ENCODE measurements at regions of chrX and their contacts with region 1.

Region 1: DNA sequence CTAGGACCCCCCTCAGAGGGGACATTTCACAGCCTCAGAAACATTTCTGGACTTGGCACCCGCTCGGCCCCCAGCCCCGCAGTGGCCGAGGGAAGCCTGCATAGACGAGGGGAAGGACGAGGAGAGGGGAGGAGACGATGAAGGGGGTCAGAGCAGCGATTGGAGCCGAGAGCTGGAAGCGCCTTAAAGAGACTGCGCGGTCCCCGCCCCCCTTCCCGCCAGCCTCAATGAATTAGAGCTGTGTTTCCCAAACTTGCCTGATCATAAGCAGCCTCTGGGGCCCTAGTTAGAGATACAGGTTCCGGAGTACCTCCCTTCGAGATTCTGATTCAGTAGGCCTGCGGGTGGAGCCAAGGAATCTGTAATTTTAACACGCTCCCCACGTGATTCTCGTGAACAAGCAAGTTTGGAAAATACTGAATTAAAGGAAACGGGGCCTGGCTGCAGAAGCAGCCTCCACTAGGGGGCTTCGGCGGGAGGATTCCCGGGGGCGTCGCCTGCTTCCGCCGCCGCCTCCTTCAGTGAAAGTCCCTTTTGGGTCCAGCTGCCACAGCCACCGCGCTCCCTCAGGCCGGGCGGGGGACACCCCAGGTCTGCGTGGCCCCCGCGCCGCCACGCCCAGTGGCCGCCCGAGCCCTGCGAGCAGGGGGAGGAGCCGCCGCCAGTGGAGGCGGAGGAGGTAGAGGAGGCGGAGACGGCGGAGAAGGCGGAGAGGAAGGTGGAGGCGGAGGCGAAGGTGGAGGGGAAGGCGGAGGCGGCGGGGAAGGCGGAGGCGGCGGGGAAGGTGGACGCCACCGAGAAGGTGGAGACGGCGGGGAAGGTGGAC is at the start of gene USP27X:
- DNase-seq: peak; percentile 84
- H3K4me3 Mint-ChIP-seq: peak within 1 kb of the TSS; percentile 74
- H3K27ac Mint-ChIP-seq: peak within 1 kb of the TSS; percentile 44
- H3K4me1 Mint-ChIP-seq: peaks cover 18% of the 10 kb centered on the region
- H3K27me3 Mint-ChIP-seq: peaks cover 2% of the 10 kb centered on the region
- total RNA-seq, gene USP27X: 2.1 to 2.4 TPM

Region 2: GRCh38 chrX:49922291-49923241 is 43.5 kb after region 1 on chrX and contains the start of gene CLCN5:
- CTCF ChIA-PET with region 1: interaction called, 39 read pairs
- POLR2A ChIA-PET with region 1: interaction called, 3 read pairs
- DNase-seq: peak; percentile 94
- H3K4me3 Mint-ChIP-seq: peak within 1 kb of the TSS; percentile 72
- H3K27ac Mint-ChIP-seq: peak within 1 kb of the TSS; percentile 52
- H3K4me1 Mint-ChIP-seq: peaks cover 18% of the 10 kb centered on the region
- H3K27me3 Mint-ChIP-seq: peaks cover 1% of the 10 kb centered on the region
- total RNA-seq, gene CLCN5: 3.0 TPM

Measured in activated CD4-positive, alpha-beta memory T cell treated with anti-CD3 and anti-CD28 coated beads, Interleukin-2, amount 10 ng/mL, durations not matched to agents 7 days and 5 days (primary cell).